K562 (cell line): ENCODE measurements at regions of chr10 and their contacts with region 1.

Region 1: DNA sequence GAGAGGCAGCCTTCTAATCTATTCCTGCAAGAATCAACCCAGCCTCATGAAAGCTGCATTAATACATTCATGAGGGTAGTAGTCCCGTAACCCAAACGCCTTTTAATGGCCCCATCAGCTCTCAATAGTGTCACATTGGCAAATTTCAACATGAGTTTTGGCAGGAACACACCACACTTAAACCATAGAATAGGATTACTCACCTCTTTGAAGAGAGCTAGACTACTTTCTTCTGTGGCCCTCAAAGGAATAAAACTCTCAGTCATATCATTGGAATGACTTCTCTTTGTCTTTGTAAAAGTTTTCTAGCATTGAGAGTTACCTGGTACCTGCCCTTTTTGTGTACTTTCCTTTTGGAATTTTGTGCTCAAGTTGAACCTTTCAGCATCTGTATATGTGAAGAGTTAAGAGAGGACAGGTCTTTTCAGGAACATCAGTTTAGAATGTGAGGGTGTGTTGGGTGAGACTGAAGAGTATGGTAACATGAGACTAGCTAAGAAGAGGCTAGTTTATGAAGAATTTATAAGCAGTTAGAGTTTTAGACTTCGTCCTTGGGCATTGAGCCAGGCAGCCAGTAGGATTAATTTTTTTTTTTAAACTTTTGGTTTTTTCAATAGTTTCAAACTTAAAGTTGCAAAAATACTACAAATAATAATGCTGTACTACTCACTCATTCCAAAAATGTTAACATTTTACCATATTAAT is 92.6 kb downstream of the MLLT10 start:
- DNase-seq: no peak
- ATAC-seq: no peak
- H3K4me3 ChIP-seq: no peak overlapping the region
- H3K27ac ChIP-seq: no peak overlapping the region
- H3K4me1 ChIP-seq: no peaks in the 10 kb centered on the region; a peak in 1 of 5 replicates
- H3K27me3 ChIP-seq: no peaks in the 10 kb centered on the region
- CTCF ChIP-seq: no peak
- EP300 ChIP-seq: no peak
- POLR2A ChIP-seq: no peak
- RAD21 ChIP-seq: no peak

Region 2: DNA sequence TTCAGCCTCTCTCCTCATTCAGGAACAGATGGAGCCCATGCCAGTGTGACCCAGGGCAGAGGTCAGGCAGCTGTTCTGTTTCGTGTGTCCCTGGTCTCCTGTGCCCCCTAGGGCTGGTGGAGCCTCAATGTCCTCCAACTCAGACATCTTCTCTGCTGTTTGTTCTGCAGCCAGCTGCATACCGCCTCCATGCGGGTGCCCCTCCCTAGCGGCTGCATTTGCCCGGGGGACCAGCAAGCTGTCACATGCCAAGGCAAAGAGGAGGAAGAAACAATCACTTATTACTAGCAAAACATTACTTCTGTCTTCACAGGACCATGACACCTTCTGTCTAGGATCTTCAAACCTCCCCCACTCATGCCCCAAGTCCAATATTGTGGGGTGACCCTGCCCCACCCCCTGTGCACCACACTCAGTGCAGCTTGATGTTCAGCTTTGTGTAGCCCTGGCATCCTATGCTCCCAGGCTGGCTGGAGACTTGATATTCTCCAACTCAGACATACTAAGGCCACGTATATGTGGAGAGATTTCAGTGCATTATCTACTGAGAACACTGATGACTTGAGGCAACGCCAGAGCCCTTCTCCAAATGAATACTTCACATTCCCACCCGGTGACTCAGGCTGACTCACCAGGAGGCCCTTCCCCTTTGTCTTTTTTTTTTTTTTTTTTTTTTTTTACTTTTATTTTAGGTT is 290.0 kb before region 1 on chr10:
- CTCF ChIA-PET with region 1: no interaction called
- POLR2A ChIA-PET with region 1: no interaction called
- in situ Hi-C with region 1: no loop called
- intact Hi-C with region 1: no loop called
- DNase-seq: peak; percentile 67 to 91 (median 77)
- ATAC-seq: peak; percentile 91
- H3K4me3 ChIP-seq: no peak overlapping the region
- H3K27ac ChIP-seq: peak overlapping the region; percentile 11; the same call in 1 of the 3 replicates
- H3K4me1 ChIP-seq: peaks cover 10 to 21% of the 10 kb centered on the region in 2 experiments
- H3K27me3 ChIP-seq: no peaks in the 10 kb centered on the region; a peak in 1 of 5 replicates
- CTCF ChIP-seq: peak in 2 of 3 experiments; percentile 11; a peak in 1 of 6 replicates
- EP300 ChIP-seq: peak; percentile 78; the same call in 1 of the 2 replicates
- POLR2A ChIP-seq: no peak
- RAD21 ChIP-seq: peak in 1 of 2 experiments; percentile 25; a peak in 1 of 4 replicates

Region 3: DNA sequence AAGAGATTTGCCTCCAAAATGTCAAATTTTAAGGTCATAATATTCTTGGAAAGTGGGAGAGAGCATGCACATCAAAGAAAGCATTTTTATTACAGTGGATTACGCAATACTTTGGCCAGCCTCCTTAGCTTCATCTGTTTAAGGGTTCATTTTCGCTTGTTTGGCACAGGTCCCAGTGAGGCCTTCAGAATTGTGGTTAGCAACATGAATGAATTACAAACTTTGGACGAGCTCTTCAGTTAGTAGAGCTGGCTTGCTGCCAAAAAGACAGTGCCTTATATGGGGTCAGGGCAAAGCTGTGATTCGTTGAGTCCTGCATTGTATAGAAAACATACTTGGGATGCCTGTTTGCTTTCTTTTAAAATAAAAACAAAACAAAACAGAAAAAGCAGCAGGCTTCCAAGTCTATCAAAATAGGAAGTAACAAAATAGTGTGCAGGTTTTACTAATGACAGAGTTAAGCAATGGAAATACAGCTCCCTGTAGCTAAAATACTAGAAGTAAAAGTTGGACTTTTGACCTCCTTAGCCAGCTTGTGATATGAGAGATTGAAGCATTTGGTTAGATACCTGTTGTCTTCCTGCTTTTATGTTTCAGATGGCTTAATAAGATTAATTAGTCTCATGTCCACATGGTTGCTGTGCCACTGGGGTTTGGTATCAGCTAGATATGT is 98.2 kb after region 1 on chr10:
- CTCF ChIA-PET with region 1: no interaction called
- POLR2A ChIA-PET with region 1: no interaction called
- in situ Hi-C with region 1: no loop called
- intact Hi-C with region 1: loop called (anchors 10 kb)
- DNase-seq: peak; percentile 63 to 95 (median 72)
- ATAC-seq: peak; percentile 95
- H3K4me3 ChIP-seq: no peak overlapping the region
- H3K27ac ChIP-seq: peak overlapping the region; percentile 52; the same call in 1 of the 3 replicates
- H3K4me1 ChIP-seq: peaks cover 0 to 20% of the 10 kb centered on the region in 2 experiments; a peak in 3 of 5 replicates
- H3K27me3 ChIP-seq: no peaks in the 10 kb centered on the region
- CTCF ChIP-seq: no peak
- EP300 ChIP-seq: peak; percentile 49
- POLR2A ChIP-seq: no peak
- RAD21 ChIP-seq: peak in 1 of 2 experiments; percentile 55; a peak in 2 of 4 replicates

Region 4: DNA sequence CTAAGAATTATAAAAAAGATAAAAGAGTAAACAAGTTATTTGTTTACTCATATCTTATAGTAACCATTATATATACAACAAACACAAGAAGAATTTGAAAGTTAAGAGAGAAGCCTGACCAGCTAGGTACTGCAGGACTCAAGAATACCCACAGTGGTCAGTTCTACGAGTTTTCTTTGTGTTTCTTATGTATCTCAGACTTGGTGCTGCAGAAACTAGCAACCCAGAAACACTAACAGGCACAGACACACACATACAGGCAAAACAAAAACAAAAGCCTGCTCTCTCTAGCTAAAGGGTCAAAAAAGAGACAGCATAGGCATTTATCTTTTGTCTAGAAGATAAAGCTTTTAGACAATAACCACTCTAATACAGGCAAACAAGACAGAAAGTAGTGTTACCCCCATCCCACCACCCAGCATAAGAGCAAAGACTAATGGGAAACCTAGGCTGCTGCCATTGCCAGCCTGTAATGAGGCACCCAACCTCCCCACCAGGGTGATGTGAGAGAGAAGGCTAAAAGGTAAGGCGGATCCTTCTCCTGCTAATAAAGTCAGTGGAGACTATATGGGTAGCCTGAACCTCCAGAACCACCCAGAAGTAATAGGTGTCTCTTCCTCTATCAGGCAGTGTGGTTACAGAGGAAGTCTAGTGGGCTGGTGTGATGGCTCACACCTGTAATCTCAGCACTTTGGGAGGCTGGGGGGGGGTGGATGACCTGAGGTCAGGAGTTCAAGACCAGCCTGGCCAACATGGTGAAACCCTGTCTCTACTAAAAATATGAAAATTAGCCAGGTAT is 263.1 kb after region 1 on chr10:
- CTCF ChIA-PET with region 1: no interaction called
- POLR2A ChIA-PET with region 1: no interaction called
- in situ Hi-C with region 1: no loop called
- intact Hi-C with region 1: no loop called
- DNase-seq: no peak
- ATAC-seq: no peak
- H3K4me3 ChIP-seq: no peak overlapping the region
- H3K27ac ChIP-seq: no peak overlapping the region
- H3K4me1 ChIP-seq: peaks cover 0 to 3% of the 10 kb centered on the region in 2 experiments; a peak in 3 of 5 replicates
- H3K27me3 ChIP-seq: no peaks in the 10 kb centered on the region
- CTCF ChIP-seq: no peak
- EP300 ChIP-seq: no peak
- POLR2A ChIP-seq: no peak
- RAD21 ChIP-seq: no peak